Heart left ventricle (tissue), 16 donors: ENCODE measurements at regions of chr3 and their contacts with region 1.

Region 1: GRCh38 chr3:12440927-12441326 is 43.4 kb upstream of the TSEN2 start:
- DNase-seq: peak; percentile 62 to 87 (median 83)
- ATAC-seq: peak; percentile 56 to 85 (median 75)
- H3K4me3 ChIP-seq: no peak overlapping the region
- H3K27ac ChIP-seq: peak overlapping the region in 10 of 12 donors; percentile 23 to 77 (median 68)
- H3K4me1 ChIP-seq: peaks cover 0 to 60% (median 29%) of the 10 kb centered on the region in 12 donors
- H3K27me3 ChIP-seq: no peaks in the 10 kb centered on the region
- CTCF ChIP-seq: no peak
- POLR2A ChIP-seq: no peak

Region 2: DNA sequence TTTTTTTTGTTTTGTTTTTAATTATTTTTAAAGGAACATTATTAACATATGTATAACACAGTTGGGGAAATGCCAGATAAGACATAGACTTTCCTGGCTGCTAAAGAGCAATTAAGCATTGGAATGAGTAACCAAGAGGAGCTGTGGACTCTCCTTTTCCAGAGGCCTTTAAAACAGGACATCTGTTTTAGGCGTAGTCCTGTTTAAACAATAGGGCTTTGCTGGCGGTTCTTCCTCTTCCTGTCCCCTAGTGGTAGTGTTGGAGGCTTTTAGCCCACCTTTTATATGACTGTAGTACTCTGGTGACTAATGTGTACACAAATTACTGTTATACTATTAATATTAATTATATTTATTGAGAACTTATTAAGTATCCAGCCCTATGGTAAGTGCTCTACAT is 70.2 kb before region 1 on chr3:
- intact Hi-C with region 1: loop called in 1 of 10 experiments (anchors 10 kb)
- DNase-seq: peak in 1 of 5 donors; percentile 24
- ATAC-seq: peak; percentile 67 to 93 (median 80)
- H3K4me3 ChIP-seq: no peak overlapping the region
- H3K27ac ChIP-seq: peak overlapping the region in 9 of 12 donors; percentile 2 to 68 (median 55)
- H3K4me1 ChIP-seq: peaks cover 0 to 43% (median 17%) of the 10 kb centered on the region in 12 donors
- H3K27me3 ChIP-seq: no peaks in the 10 kb centered on the region
- CTCF ChIP-seq: peak in 11 of 12 donors; percentile 16 to 52 (median 34)
- POLR2A ChIP-seq: no peak